ENCODE measurements at regions of chr1 and their contacts with region 1.

Region 1: GRCh38 chr1:226121587-226122400 is 59.3 kb downstream of the H3-3A start:
- DNase-seq: no peak
- ATAC-seq: peak; percentile 79
- H3K4me3 ChIP-seq: peak overlapping the region; percentile 81
- H3K27ac ChIP-seq: peak overlapping the region; percentile 77
- H3K4me1 ChIP-seq: peaks cover 28% of the 10 kb centered on the region
- H3K27me3 ChIP-seq: no peaks in the 10 kb centered on the region
- CTCF ChIP-seq: peak; percentile 64 to 80 (median 72); a peak in 5 of 6 replicates
- EP300 ChIP-seq: no peak
- POLR2A ChIP-seq: peak; percentile 71
- RAD21 ChIP-seq: peak; percentile 90

Region 2: GRCh38 chr1:225933072-225933471 is 188.7 kb before region 1 on chr1:
- CTCF ChIA-PET with region 1: no interaction called
- POLR2A ChIA-PET with region 1: no interaction called
- RAD21 ChIA-PET with region 1: no interaction called
- SMC1A ChIA-PET with region 1: no interaction called
- in situ Hi-C with region 1: no loop called
- intact Hi-C with region 1: no loop called
- DNase-seq: no peak
- ATAC-seq: no peak
- H3K4me3 ChIP-seq: no peak overlapping the region
- H3K27ac ChIP-seq: no peak overlapping the region
- H3K4me1 ChIP-seq: no peaks in the 10 kb centered on the region
- H3K27me3 ChIP-seq: no peaks in the 10 kb centered on the region
- CTCF ChIP-seq: no peak
- EP300 ChIP-seq: no peak
- POLR2A ChIP-seq: no peak
- RAD21 ChIP-seq: no peak

Region 3: DNA sequence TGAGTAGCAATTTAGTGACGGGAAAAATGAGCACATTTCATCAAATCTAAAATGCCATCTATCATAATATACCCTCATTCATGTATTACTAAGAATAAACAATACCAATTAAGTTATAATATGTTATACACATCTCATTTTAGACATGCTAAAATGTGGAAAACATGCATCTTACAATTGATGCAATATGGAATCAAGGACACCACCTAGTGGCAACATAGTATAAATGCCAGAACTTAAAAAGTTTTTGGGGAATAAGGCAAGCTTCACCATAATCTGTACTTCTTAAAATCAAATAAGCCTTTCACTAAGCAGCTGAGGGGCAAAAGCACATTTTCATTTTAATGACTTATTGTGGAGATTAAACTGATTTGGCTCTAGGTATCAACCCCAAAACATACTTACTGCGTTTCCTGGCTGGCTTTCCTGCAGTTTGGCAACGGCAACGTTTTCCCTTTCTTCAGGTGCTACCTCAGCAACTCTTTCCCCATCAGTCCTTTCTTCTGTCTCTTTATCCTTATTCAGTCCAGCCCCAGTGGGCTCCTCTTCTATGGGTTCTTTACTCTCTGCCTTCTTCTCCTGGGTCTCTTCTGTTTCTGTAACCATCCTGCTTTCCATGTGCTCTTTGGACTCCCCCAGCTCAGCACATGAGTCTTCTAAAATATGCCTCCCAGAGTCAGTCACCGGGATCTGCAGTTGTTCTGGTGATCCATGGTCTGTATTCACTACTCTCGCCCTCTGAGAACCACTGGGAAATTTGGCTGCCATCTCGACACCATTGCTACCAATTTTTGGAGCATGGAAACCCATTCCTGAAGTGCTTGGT is 134.1 kb before region 1 on chr1:
- CTCF ChIA-PET with region 1: interaction called, 21 read pairs
- POLR2A ChIA-PET with region 1: no interaction called
- RAD21 ChIA-PET with region 1: interaction called, 6 read pairs
- SMC1A ChIA-PET with region 1: interaction called, 8 read pairs
- in situ Hi-C with region 1: no loop called
- intact Hi-C with region 1: no loop called
- DNase-seq: no peak
- ATAC-seq: peak; percentile 42
- H3K4me3 ChIP-seq: no peak overlapping the region
- H3K27ac ChIP-seq: no peak overlapping the region
- H3K4me1 ChIP-seq: peaks cover 26% of the 10 kb centered on the region
- H3K27me3 ChIP-seq: no peaks in the 10 kb centered on the region
- CTCF ChIP-seq: peak; percentile 62 to 70 (median 63)
- EP300 ChIP-seq: no peak
- POLR2A ChIP-seq: no peak
- RAD21 ChIP-seq: peak; percentile 50

Region 4: GRCh38 chr1:226109829-226110248 is 12.0 kb before region 1 on chr1:
- CTCF ChIA-PET with region 1: interaction called, 42 read pairs
- POLR2A ChIA-PET with region 1: interaction called, 20 read pairs
- RAD21 ChIA-PET with region 1: interaction called, 21 read pairs
- SMC1A ChIA-PET with region 1: interaction called, 18 read pairs
- in situ Hi-C with region 1: no loop called
- intact Hi-C with region 1: no loop called
- DNase-seq: no peak
- ATAC-seq: peak; percentile 71
- H3K4me3 ChIP-seq: peak overlapping the region; percentile 77
- H3K27ac ChIP-seq: peak overlapping the region; percentile 92
- H3K4me1 ChIP-seq: peaks cover 23% of the 10 kb centered on the region
- H3K27me3 ChIP-seq: no peaks in the 10 kb centered on the region
- CTCF ChIP-seq: peak in 2 of 3 experiments; percentile 12 to 20; a peak in 1 of 6 replicates
- EP300 ChIP-seq: no peak
- POLR2A ChIP-seq: 0 out of 2 replicates have a peak, but pooled peaks have one; percentile 13
- RAD21 ChIP-seq: peak; percentile 25; the same call in 1 of the 2 replicates

Region 5: GRCh38 chr1:226157761-226158316 is 36.0 kb after region 1 on chr1:
- CTCF ChIA-PET with region 1: interaction called, 32 read pairs
- POLR2A ChIA-PET with region 1: no interaction called
- RAD21 ChIA-PET with region 1: interaction called, 9 read pairs
- SMC1A ChIA-PET with region 1: interaction called, 7 read pairs
- in situ Hi-C with region 1: no loop called
- intact Hi-C with region 1: loop called (anchors 5 kb)
- DNase-seq: no peak
- ATAC-seq: peak; percentile 56
- H3K4me3 ChIP-seq: no peak overlapping the region
- H3K27ac ChIP-seq: peak overlapping the region; percentile 1; the same call in 1 of the 2 replicates
- H3K4me1 ChIP-seq: peaks cover 14% of the 10 kb centered on the region
- H3K27me3 ChIP-seq: no peaks in the 10 kb centered on the region
- CTCF ChIP-seq: no peak
- EP300 ChIP-seq: no peak
- POLR2A ChIP-seq: no peak
- RAD21 ChIP-seq: no peak

Region 6: DNA sequence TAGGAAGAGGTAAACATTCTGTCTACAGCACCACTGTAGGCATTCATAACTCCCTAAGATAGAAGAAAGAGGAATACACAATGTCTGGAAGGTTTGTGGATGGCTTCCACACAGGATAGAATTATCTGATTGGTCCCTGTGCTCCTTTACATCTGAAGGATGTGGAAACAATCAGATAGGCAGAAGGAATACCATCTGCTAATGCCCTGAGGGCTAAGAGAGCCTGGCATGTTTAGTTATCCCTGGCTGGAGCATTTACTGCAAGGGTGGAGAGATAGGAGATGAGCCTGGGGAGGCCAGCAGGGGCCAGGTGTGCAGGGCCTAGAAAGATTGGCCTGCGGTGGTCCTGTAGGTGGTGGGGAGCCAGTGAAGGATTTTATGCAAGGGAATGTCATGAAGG is 73.3 kb after region 1 on chr1:
- CTCF ChIA-PET with region 1: interaction called, 505 read pairs
- POLR2A ChIA-PET with region 1: interaction called, 19 read pairs
- RAD21 ChIA-PET with region 1: interaction called, 118 read pairs
- SMC1A ChIA-PET with region 1: interaction called, 213 read pairs
- in situ Hi-C with region 1: no loop called
- intact Hi-C with region 1: loop called (anchors 1 kb)
- DNase-seq: no peak
- ATAC-seq: no peak
- H3K4me3 ChIP-seq: no peak overlapping the region
- H3K27ac ChIP-seq: no peak overlapping the region
- H3K4me1 ChIP-seq: no peaks in the 10 kb centered on the region
- H3K27me3 ChIP-seq: no peaks in the 10 kb centered on the region; a peak in 1 of 4 replicates
- CTCF ChIP-seq: no peak
- EP300 ChIP-seq: no peak
- POLR2A ChIP-seq: no peak
- RAD21 ChIP-seq: no peak

Region 7: DNA sequence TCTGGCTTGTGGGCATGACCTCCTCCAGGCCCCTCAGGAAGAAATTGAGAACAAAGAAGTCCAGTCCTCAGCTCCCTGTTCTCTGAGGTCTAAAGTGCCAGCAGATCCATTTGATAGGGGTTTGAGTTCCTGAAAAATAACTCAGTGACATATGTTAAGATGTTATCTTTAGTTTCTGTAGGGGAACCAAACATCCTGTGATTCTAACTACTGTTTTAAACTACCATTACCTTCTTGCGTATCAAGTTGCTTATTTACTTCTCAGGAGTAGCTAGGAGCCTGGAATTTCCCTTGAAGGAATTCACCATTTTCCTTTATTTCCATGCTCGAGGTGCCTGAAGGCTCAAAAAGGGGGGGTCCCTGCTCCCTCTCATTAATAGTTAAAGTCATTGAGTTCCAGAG is 206.0 kb after region 1 on chr1:
- CTCF ChIA-PET with region 1: interaction called, 75 read pairs
- POLR2A ChIA-PET with region 1: interaction called, 6 read pairs
- RAD21 ChIA-PET with region 1: interaction called, 30 read pairs
- SMC1A ChIA-PET with region 1: interaction called, 55 read pairs
- in situ Hi-C with region 1: no loop called
- intact Hi-C with region 1: no loop called
- DNase-seq: no peak
- ATAC-seq: no peak
- H3K4me3 ChIP-seq: no peak overlapping the region
- H3K27ac ChIP-seq: no peak overlapping the region
- H3K4me1 ChIP-seq: no peaks in the 10 kb centered on the region
- H3K27me3 ChIP-seq: no peaks in the 10 kb centered on the region
- CTCF ChIP-seq: no peak
- EP300 ChIP-seq: no peak
- POLR2A ChIP-seq: no peak
- RAD21 ChIP-seq: no peak

Region 8: DNA sequence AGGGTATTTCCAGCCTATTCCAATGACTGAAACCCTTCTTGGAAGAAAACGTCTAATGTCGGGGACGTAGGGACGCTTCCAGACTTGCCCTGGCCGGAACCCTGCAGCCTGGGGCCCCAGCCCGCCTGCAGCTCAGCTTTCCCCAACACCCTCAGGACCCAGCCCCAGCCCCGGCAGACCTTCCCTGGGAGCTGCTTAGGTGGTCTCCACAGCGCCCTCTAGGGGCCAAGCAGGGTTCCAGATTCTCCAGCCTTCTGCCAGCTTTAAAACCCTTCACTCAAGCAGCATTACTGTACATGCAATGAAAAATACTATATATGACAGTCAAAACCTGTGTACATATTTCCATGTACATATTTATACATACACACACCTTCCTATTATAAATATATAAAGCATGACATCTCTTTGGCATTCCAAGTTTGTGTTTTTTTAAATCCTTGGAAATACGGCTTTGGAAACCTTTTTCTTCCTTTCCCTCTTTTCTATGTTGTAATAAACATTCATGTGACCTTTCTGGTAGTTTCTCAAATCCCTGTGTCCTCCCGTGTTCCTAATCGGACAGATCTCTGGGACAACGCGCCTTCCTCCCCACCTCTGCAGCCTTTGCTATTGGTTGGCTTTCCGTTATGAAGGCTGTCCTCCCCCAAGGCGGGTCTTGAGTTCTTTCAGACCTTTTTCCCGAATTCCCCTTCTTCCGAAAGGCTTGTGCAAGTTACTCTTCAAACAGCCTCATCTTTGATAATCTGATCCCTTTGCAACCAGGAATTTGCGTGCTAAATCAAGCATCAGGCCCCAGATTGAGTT is 487.1 kb after region 1 on chr1:
- CTCF ChIA-PET with region 1: interaction called, 3 read pairs
- POLR2A ChIA-PET with region 1: no interaction called
- RAD21 ChIA-PET with region 1: no interaction called
- SMC1A ChIA-PET with region 1: no interaction called
- in situ Hi-C with region 1: no loop called
- intact Hi-C with region 1: loop called (anchors 10 kb)
- DNase-seq: no peak
- ATAC-seq: peak; percentile 96
- H3K4me3 ChIP-seq: no peak overlapping the region
- H3K27ac ChIP-seq: no peak overlapping the region
- H3K4me1 ChIP-seq: no peaks in the 10 kb centered on the region
- H3K27me3 ChIP-seq: peaks cover 0 to 1% of the 10 kb centered on the region in 2 experiments; a peak in 3 of 4 replicates
- CTCF ChIP-seq: peak; percentile 71 to 88 (median 84)
- EP300 ChIP-seq: no peak
- POLR2A ChIP-seq: no peak
- RAD21 ChIP-seq: peak; percentile 66

Measured in GM12878 (cell line).